ENCODE measurements at regions of chr7 and their contacts with region 1.

Region 1: GRCh38 chr7:128862571-128863432 is at the start of gene ATP6V1F:
- DNase-seq: peak; percentile 98
- ATAC-seq: peak; percentile 85 to 93
- total RNA-seq, gene ATP6V1F: 117 to 119 TPM

Region 2: DNA sequence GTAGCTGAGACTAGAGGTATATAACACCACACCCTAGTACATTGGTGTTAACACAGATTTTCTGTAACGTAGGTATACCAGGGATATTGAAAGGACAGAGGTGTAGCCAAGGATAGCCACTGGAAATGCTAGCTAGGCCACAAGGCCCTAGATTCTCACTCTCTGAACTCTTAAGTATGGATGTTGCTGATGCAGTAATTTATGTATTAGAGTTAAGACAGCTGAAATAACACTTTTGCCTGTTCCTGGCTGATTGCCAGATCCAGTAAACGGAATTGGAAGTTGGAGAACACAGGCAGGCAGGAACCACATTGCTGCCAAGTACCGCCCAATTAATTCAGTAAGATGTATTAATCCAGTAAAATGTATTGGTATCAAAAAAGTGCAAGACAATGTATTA is 121.8 kb before region 1 on chr7:
- intact Hi-C with region 1: loop called in 1 of 2 experiments (anchors 5 kb)
- DNase-seq: peak; percentile 34
- ATAC-seq: no peak